HepG2 (cell line): ENCODE measurements at regions of chr22 and their contacts with region 1.

Region 1: GRCh38 chr22:18987765-18988164 is 51.7 kb upstream of the PRODH start:
- DNase-seq: peak; percentile 32
- ATAC-seq: peak; percentile 94
- H3K4me3 ChIP-seq: no peak overlapping the region
- H3K27ac ChIP-seq: no peak overlapping the region
- H3K4me1 ChIP-seq: no peaks in the 10 kb centered on the region
- H3K27me3 ChIP-seq: peaks cover 5 to 20% of the 10 kb centered on the region in 2 experiments; a peak in 4 of 5 replicates
- CTCF ChIP-seq: peak; percentile 78
- EP300 ChIP-seq: no peak
- POLR2A ChIP-seq: no peak
- RAD21 ChIP-seq: peak; percentile 56

Region 2: DNA sequence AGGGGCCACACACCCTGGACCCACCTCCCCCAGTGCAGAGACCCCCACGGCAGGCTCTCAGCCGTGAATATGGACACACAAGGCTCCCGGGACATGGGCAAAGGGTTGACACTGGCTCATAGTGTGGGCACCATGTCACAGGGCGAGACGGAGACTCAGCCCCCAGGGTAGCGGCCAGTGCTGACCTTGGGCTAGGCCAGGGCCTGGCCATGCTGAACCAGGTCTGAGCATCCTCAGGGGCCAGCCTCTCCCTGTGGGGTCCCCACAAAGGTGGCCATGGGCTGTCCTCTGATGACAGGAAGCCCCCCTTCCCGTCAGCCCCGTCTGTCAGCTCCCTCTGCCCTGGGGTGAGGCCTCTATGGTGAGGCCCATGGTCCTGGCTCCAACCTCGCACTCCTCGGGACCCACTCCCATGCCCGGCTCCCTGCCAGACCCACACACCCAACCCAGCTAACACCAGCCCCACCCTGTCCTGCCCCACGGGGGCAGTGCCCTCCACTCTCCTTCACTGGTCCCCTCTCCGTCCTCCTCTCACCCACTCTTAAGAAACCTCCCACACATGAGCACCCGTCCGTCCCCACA is 32.7 kb before region 1 on chr22:
- CTCF ChIA-PET with region 1: interaction called, 8 read pairs
- POLR2A ChIA-PET with region 1: no interaction called
- in situ Hi-C with region 1: no loop called
- intact Hi-C with region 1: loop called (anchors 1 kb)
- DNase-seq: no peak
- ATAC-seq: no peak; the same call in 2 of the 3 replicates
- H3K4me3 ChIP-seq: no peak overlapping the region
- H3K27ac ChIP-seq: no peak overlapping the region
- H3K4me1 ChIP-seq: no peaks in the 10 kb centered on the region
- H3K27me3 ChIP-seq: peaks cover 3 to 9% of the 10 kb centered on the region in 2 experiments; a peak in 3 of 5 replicates
- CTCF ChIP-seq: no peak
- EP300 ChIP-seq: no peak
- POLR2A ChIP-seq: no peak
- RAD21 ChIP-seq: no peak

Region 3: GRCh38 chr22:19016081-19016766 is 28.5 kb after region 1 on chr22:
- CTCF ChIA-PET with region 1: no interaction called
- POLR2A ChIA-PET with region 1: no interaction called
- in situ Hi-C with region 1: no loop called
- intact Hi-C with region 1: no loop called
- DNase-seq: no peak
- ATAC-seq: no peak
- H3K4me3 ChIP-seq: no peak overlapping the region
- H3K27ac ChIP-seq: no peak overlapping the region
- H3K4me1 ChIP-seq: no peaks in the 10 kb centered on the region
- H3K27me3 ChIP-seq: peaks cover 0 to 18% of the 10 kb centered on the region in 2 experiments; a peak in 3 of 5 replicates
- CTCF ChIP-seq: no peak
- EP300 ChIP-seq: no peak
- POLR2A ChIP-seq: no peak
- RAD21 ChIP-seq: no peak

Region 4: DNA sequence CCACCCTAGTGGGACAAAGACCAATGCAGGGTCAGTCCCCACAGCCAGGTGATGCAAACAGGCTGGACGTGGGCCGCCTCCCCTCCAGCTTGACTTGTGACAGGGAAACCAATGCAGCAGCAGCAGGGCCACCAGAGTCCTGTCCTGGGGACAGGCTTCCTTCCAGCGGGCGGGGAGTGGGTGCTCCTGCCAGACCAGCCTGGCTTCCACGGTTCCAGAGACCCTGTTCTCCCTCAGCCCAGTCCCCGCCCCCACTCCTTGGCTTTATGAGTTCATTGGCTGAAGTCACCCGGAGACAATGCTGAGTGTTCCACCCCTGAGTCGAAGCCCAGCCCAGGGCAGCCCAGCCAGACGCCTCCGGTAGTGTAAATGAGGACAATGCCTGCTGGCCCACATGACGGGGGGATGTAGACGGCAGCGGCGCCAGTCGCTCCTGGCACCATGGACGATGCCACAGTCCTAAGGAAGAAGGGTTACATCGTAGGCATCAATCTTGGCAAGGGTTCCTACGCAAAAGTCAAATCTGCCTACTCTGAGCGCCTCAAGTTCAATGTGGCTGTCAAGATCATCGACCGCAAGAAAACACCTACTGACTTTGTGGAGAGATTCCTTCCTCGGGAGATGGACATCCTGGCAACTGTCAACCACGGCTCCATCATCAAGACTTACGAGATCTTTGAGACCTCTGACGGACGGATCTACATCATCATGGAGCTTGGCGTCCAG is 143.4 kb after region 1 on chr22 and contains the start of gene TSSK2:
- CTCF ChIA-PET with region 1: no interaction called
- POLR2A ChIA-PET with region 1: no interaction called
- in situ Hi-C with region 1: no loop called
- intact Hi-C with region 1: no loop called
- DNase-seq: no peak
- ATAC-seq: no peak
- H3K4me3 ChIP-seq: no peak within 1 kb of the TSS
- H3K27ac ChIP-seq: no peak within 1 kb of the TSS
- H3K4me1 ChIP-seq: peaks cover 8% of the 10 kb centered on the region
- H3K27me3 ChIP-seq: peaks cover 2 to 24% of the 10 kb centered on the region in 2 experiments; a peak in 3 of 5 replicates
- CTCF ChIP-seq: no peak
- EP300 ChIP-seq: no peak
- POLR2A ChIP-seq: no peak
- RAD21 ChIP-seq: no peak
- total RNA-seq, gene TSSK2: not detected in 2 replicates